Left cardiac atrium (tissue), 4 donors: ENCODE measurements at regions of chr7 and their contacts with region 1.

Region 1: DNA sequence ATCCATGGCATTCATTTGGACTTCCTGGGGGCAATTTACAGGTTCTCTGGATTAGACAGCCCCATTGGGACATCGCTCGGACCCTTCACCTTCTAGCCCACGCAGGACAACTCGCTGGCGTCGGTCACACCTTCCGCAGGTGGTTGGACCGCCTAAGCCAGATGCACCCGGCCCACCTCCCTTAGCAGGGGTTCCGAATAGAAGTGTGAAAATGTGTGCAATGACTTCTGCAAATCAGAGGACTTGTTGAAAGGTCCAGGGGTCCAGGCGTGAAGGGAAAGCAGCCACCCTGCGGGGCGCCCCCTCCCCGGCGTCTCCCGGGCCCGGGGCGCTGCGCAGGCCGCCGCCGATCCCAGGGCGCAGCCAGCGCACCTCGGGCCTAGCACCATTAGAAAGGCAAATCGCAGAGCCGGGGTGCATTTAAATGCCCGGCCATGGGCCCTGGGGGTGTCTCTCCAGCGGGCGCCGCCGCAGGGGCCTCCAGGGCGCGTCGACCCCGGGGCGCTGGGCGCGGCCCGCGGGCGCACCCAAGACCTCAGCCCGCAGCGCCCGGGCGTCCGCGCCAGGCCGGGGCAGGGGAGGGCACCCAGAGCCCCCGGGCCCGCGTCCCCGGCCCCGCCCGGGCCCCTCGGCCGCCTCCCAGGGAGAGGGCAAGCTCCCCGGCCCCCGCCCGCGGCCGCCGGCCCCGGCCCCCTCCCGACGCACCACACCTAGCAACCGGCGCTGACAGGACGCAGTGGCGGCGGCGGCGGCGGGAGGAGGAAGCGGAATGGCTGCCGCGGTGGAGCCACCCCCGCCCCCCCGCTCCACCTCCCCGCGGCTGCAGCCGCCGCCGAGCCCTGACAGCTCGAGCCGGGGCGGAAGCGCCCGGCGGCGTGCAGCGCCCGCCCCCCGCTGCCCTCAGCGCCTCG is 1.2 kb downstream of the JAZF1 start:
- DNase-seq: peak; percentile 86
- ATAC-seq: peak; percentile 73 to 80

Region 2: DNA sequence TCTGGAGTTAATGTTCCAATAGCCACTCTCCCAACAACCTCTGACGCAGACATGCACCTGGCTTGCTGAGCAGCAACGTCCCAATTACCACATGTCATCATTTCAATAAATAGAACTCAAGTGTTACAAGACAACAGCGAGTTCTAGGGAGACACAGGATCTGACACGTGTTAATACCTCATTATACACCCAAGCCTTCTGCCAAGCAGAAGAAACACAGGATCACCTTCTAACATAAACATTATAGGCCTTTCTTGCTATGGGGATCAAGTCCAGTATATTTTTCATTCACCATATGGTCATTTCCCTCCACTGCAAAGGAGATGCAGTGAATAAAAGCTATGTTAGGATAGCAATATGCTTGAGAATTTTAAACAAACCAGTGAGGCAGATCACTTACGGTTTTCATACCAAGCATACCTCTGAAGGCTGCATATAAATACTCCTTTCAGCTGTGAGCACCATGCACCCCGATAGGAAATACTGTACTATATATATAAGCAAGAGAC is 73.0 kb before region 1 on chr7:
- intact Hi-C with region 1: loop called in 1 of 2 experiments (anchors 5 kb)
- DNase-seq: no peak
- ATAC-seq: peak; percentile 58 to 65

Region 3: GRCh38 chr7:28272461-28272877 is 93.1 kb after region 1 on chr7:
- intact Hi-C with region 1: loop called in 1 of 2 experiments (anchors 5 kb)
- DNase-seq: peak; percentile 29
- ATAC-seq: peak in 1 of 2 donors; percentile 77